CD14-positive monocyte (primary cell): ENCODE measurements at regions of chr9 and their contacts with region 1.

Region 1: GRCh38 chr9:97921959-97922724 is at the start of gene TRMO:
- DNase-seq: peak; percentile 99 to 100 (median 99)
- H3K4me3 ChIP-seq: peak within 1 kb of the TSS; percentile 53 to 89 (median 83)
- H3K4me3 Mint-ChIP-seq: peak within 1 kb of the TSS; percentile 84 to 97
- H3K27ac ChIP-seq: peak within 1 kb of the TSS; percentile 94 to 98
- H3K27ac Mint-ChIP-seq: peak within 1 kb of the TSS; percentile 99 to 100 (median 99)
- H3K4me1 ChIP-seq: peaks cover 39 to 54% of the 10 kb centered on the region in 2 donors
- H3K4me1 Mint-ChIP-seq: peaks cover 49% of the 10 kb centered on the region
- H3K27me3 ChIP-seq: no peaks in the 10 kb centered on the region
- H3K27me3 Mint-ChIP-seq: no peaks in the 10 kb centered on the region
- CTCF ChIP-seq: peak; percentile 22
- polyA plus RNA-seq, gene TRMO: 13.4 to 20.6 (median 13.5) TPM

Region 2: GRCh38 chr9:97332993-97333392 is 589.1 kb before region 1 on chr9:
- intact Hi-C with region 1: no loop called
- DNase-seq: no peak
- H3K4me3 ChIP-seq: no peak overlapping the region
- H3K4me3 Mint-ChIP-seq: no peak overlapping the region
- H3K27ac ChIP-seq: no peak overlapping the region
- H3K27ac Mint-ChIP-seq: no peak overlapping the region
- H3K4me1 ChIP-seq: no peaks in the 10 kb centered on the region
- H3K4me1 Mint-ChIP-seq: no peaks in the 10 kb centered on the region
- H3K27me3 ChIP-seq: no peaks in the 10 kb centered on the region
- H3K27me3 Mint-ChIP-seq: no peaks in the 10 kb centered on the region
- CTCF ChIP-seq: no peak

Region 3: GRCh38 chr9:97632985-97633858 is 288.9 kb before region 1 on chr9 and contains the starts of genes NCBP1 and TSTD2:
- intact Hi-C with region 1: loop called in 1 of 2 experiments (anchors 10 kb)
- DNase-seq: peak; percentile 96 to 98 (median 96)
- H3K4me3 ChIP-seq: peak within 1 kb of the TSS; percentile 74 to 96 (median 93)
- H3K4me3 Mint-ChIP-seq: peak within 1 kb of the TSS; percentile 94 to 98
- H3K27ac ChIP-seq: peak within 1 kb of the TSS; percentile 98
- H3K27ac Mint-ChIP-seq: peak within 1 kb of the TSS; percentile 97 to 100 (median 100)
- H3K4me1 ChIP-seq: peaks cover 24 to 36% of the 10 kb centered on the region in 2 donors
- H3K4me1 Mint-ChIP-seq: peaks cover 48% of the 10 kb centered on the region
- H3K27me3 ChIP-seq: no peaks in the 10 kb centered on the region
- H3K27me3 Mint-ChIP-seq: no peaks in the 10 kb centered on the region
- CTCF ChIP-seq: no peak
- polyA plus RNA-seq, gene NCBP1: 8.9 to 15.8 (median 11.1) TPM
- polyA plus RNA-seq, gene TSTD2: 1.2 to 11.4 (median 2.4) TPM

Region 4: DNA sequence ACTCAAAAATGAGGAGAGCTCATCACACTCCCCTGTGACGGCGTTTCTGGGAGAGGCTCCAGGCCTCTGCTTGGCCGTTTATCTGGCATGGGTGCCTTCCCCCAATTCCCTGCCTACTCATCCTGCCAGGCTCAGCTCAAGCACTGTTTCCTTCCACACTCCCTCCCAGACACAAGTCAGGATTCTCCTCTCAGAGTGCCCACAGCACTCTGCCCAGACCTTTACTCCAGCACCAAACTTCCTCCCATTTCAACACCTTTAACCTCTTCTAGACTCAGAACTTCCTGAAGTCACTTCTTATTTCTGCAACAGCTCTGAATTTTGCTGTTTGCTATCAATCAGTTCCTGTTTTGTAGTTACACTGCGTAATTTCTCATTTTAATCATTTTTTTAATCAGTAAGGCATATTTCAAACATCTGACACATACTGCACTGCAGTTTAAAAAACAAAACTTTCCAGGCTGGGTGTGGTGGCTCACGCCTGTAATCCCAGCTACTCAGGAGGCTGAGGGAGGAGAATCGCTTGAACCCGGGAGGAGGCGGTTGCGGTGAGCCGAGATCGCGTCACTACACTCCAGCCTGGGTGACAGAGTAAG is 15.8 kb before region 1 on chr9:
- intact Hi-C with region 1: loop called in 1 of 2 experiments (anchors 2 kb)
- DNase-seq: peak; percentile 79 to 94 (median 88)
- H3K4me3 ChIP-seq: peak overlapping the region; percentile 1 to 56 (median 24)
- H3K4me3 Mint-ChIP-seq: peak overlapping the region; percentile 74 to 83
- H3K27ac ChIP-seq: peak overlapping the region; percentile 87 to 95
- H3K27ac Mint-ChIP-seq: peak overlapping the region; percentile 95 to 99 (median 98)
- H3K4me1 ChIP-seq: peaks cover 53 to 64% of the 10 kb centered on the region in 2 donors
- H3K4me1 Mint-ChIP-seq: peaks cover 54% of the 10 kb centered on the region
- H3K27me3 ChIP-seq: no peaks in the 10 kb centered on the region
- H3K27me3 Mint-ChIP-seq: peaks cover 0 to 4% (median 0%) of the 10 kb centered on the region in 3 donors
- CTCF ChIP-seq: no peak

Region 5: GRCh38 chr9:97982683-97983588 is 60.8 kb after region 1 on chr9 and contains the start of gene ANP32B:
- intact Hi-C with region 1: loop called in 1 of 2 experiments (anchors 5 kb)
- DNase-seq: peak; percentile 82 to 90 (median 86)
- H3K4me3 ChIP-seq: peak within 1 kb of the TSS; percentile 82 to 95 (median 95)
- H3K4me3 Mint-ChIP-seq: peak within 1 kb of the TSS; percentile 83 to 90
- H3K27ac ChIP-seq: peak within 1 kb of the TSS; percentile 83 to 87
- H3K27ac Mint-ChIP-seq: peak within 1 kb of the TSS; percentile 59 to 89 (median 85)
- H3K4me1 ChIP-seq: peaks cover 28 to 43% of the 10 kb centered on the region in 2 donors
- H3K4me1 Mint-ChIP-seq: peaks cover 31% of the 10 kb centered on the region
- H3K27me3 ChIP-seq: peaks cover 0 to 8% of the 10 kb centered on the region in 2 donors
- H3K27me3 Mint-ChIP-seq: peaks cover 3 to 6% (median 3%) of the 10 kb centered on the region in 3 donors
- CTCF ChIP-seq: peak; percentile 97
- polyA plus RNA-seq, gene ANP32B: 29.7 to 40.7 (median 30.8) TPM

Region 6: GRCh38 chr9:98034593-98035546 is 112.7 kb after region 1 on chr9:
- intact Hi-C with region 1: loop called (anchors 5 kb)
- DNase-seq: peak; percentile 76 to 84 (median 79)
- H3K4me3 ChIP-seq: no peak overlapping the region
- H3K4me3 Mint-ChIP-seq: peak overlapping the region; percentile 43 to 46
- H3K27ac ChIP-seq: no peak overlapping the region
- H3K27ac Mint-ChIP-seq: peak overlapping the region in 2 of 7 donors; percentile 26 to 80
- H3K4me1 ChIP-seq: peaks cover 4 to 6% of the 10 kb centered on the region in 2 donors
- H3K4me1 Mint-ChIP-seq: peaks cover 12% of the 10 kb centered on the region
- H3K27me3 ChIP-seq: no peaks in the 10 kb centered on the region
- H3K27me3 Mint-ChIP-seq: peaks cover 0 to 5% (median 2%) of the 10 kb centered on the region in 3 donors
- CTCF ChIP-seq: peak; percentile 91

Region 7: GRCh38 chr9:98056269-98057137 is 134.4 kb after region 1 on chr9 and contains the start of gene NANS:
- intact Hi-C with region 1: loop called in 1 of 2 experiments (anchors 5 kb)
- DNase-seq: peak; percentile 88 to 92 (median 90)
- H3K4me3 ChIP-seq: peak within 1 kb of the TSS; percentile 69 to 99 (median 90)
- H3K4me3 Mint-ChIP-seq: peak within 1 kb of the TSS; percentile 99
- H3K27ac ChIP-seq: peak within 1 kb of the TSS; percentile 90 to 95
- H3K27ac Mint-ChIP-seq: peak within 1 kb of the TSS; percentile 96 to 99 (median 98)
- H3K4me1 ChIP-seq: peaks cover 23 to 24% of the 10 kb centered on the region in 2 donors
- H3K4me1 Mint-ChIP-seq: peaks cover 32% of the 10 kb centered on the region
- H3K27me3 ChIP-seq: no peaks in the 10 kb centered on the region
- H3K27me3 Mint-ChIP-seq: no peaks in the 10 kb centered on the region
- CTCF ChIP-seq: no peak
- polyA plus RNA-seq, gene NANS: 41.3 to 109 (median 95.9) TPM